ENCODE measurements at regions of chr2 and their contacts with region 1.

Region 1: GRCh38 chr2:27885234-27885633 is 5.0 kb downstream of the RBKS start:
- DNase-seq: no peak
- H3K4me3 ChIP-seq: no peak overlapping the region
- H3K27ac ChIP-seq: peak overlapping the region; percentile 94
- H3K4me1 ChIP-seq: peaks cover 29% of the 10 kb centered on the region
- H3K27me3 ChIP-seq: no peaks in the 10 kb centered on the region
- CTCF ChIP-seq: no peak
- POLR2A ChIP-seq: no peak

Region 2: DNA sequence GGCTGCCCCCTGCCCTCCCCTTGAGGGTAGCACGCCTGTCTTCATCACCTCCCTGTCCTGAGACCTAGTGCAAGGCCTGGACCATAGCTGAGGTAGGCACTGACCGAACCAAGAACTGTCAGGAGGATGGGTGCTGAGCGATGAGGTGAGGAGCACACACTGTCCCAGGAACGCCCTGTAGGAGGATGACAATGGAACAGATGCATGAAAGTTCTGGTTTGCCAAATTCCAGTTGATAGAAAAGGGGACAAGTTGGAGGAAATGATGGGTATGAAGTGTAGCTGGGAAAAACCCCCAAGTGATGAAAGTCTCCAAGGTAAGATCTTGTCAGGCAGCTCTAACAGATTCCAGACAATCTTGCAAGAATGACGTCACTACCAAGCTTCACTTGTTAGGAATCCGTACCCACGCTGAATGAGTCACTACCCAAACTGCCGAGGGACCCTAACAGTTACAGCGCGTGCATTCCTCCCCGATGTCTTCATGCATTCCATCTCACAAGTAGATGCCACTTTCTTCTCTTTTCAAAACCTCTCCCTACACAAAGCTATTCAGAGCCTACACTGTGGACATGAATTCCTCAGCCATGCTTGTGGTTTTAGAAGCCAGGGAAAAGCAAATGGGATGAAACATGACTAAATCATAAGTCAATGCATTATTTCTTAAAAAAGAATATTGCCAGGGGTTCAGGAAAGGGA is 86.1 kb before region 1 on chr2:
- CTCF ChIA-PET with region 1: no interaction called
- POLR2A ChIA-PET with region 1: interaction called, 3 read pairs
- dilution Hi-C with region 1: no loop called
- intact Hi-C with region 1: loop called (anchors 1 kb)
- DNase-seq: peak; percentile 93
- H3K4me3 ChIP-seq: no peak overlapping the region
- H3K27ac ChIP-seq: peak overlapping the region; percentile 94
- H3K4me1 ChIP-seq: peaks cover 34% of the 10 kb centered on the region
- H3K27me3 ChIP-seq: no peaks in the 10 kb centered on the region
- CTCF ChIP-seq: no peak
- POLR2A ChIP-seq: no peak

Measured in endothelial cell of umbilical vein (primary cell).